HCT116 (cell line): ENCODE measurements at regions of chr20 and their contacts with region 1.

Region 1: GRCh38 chr20:36199345-36200257 is 36.7 kb upstream of the AAR2 start:
- DNase-seq: peak; percentile 45
- ATAC-seq: peak; percentile 91
- H3K4me3 ChIP-seq: no peak overlapping the region
- H3K27ac ChIP-seq: no peak overlapping the region
- H3K4me1 ChIP-seq: no peaks in the 10 kb centered on the region
- H3K27me3 ChIP-seq: no peaks in the 10 kb centered on the region
- CTCF ChIP-seq: peak; percentile 83 to 91 (median 88)
- POLR2A ChIP-seq: no peak
- RAD21 ChIP-seq: peak; percentile 89

Region 2: DNA sequence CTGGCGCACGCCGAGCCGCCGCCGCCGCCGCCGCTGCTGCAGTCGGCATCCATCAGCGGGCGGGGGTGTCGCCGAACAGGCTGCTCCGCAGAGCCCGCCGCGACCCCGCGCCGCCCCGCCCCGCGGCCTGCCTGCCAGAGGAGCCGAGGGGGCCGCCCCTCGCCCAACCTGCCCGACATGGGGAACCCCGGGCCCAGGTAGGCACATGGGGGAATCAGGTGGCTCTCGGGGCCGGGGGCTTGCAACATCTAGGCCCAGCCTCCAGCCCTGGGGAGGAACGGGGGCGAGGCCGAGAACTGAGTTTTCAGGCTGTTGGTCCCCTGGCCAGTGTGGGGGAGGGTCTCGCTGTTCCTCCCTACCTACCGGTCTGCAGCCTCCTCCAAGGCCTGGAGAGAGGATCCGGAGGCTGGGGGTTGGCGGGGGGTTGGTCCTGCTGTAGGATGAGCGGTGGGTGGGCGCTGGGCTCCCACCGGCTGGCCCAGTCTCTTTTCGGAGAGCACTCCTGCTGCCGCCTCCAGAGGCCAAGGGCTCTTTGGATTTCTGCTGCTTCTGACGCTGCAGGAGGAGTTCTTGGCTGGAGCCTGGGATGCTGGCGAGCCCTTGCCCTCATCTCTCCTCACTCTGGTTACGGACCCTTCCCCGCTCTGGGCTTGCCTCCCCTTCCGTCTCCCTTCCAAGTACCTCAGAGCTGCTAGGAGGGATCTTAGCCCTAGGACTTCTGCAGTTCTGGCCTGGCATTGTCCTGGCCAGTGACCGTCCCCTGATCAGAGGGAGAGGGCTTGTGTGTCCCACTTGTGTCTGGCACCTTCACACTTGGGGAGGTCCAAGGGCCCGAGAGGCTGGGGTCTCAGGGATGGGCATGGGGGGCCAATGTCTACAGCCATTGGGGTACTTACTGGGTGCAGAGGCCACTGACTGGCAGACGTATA is 44.6 kb before region 1 on chr20 and contains the start of gene EPB41L1:
- CTCF ChIA-PET with region 1: interaction called, 13 read pairs
- POLR2A ChIA-PET with region 1: no interaction called
- RAD21 ChIA-PET with region 1: interaction called in 1 of 2 experiments, 10 read pairs
- intact Hi-C with region 1: loop called (anchors 1 kb)
- DNase-seq: no peak
- ATAC-seq: peak; percentile 44
- H3K4me3 ChIP-seq: peak within 1 kb of the TSS; percentile 53 to 64
- H3K27ac ChIP-seq: peak within 1 kb of the TSS; percentile 44; the same call in 1 of the 2 replicates
- H3K4me1 ChIP-seq: peaks cover 14 to 27% of the 10 kb centered on the region in 2 experiments
- H3K27me3 ChIP-seq: no peaks in the 10 kb centered on the region
- CTCF ChIP-seq: no peak
- POLR2A ChIP-seq: no peak
- RAD21 ChIP-seq: no peak
- total RNA-seq, gene EPB41L1: 42.1 TPM

Region 3: GRCh38 chr20:36214684-36215256 is 15.2 kb after region 1 on chr20:
- CTCF ChIA-PET with region 1: interaction called, 13 read pairs
- POLR2A ChIA-PET with region 1: no interaction called
- RAD21 ChIA-PET with region 1: no interaction called
- intact Hi-C with region 1: no loop called
- DNase-seq: no peak
- ATAC-seq: peak; percentile 70
- H3K4me3 ChIP-seq: no peak overlapping the region
- H3K27ac ChIP-seq: no peak overlapping the region
- H3K4me1 ChIP-seq: peaks cover 3 to 5% of the 10 kb centered on the region in 2 experiments; a peak in 2 of 4 replicates
- H3K27me3 ChIP-seq: no peaks in the 10 kb centered on the region
- CTCF ChIP-seq: peak; percentile 65 to 79 (median 76)
- POLR2A ChIP-seq: no peak
- RAD21 ChIP-seq: peak; percentile 75

Region 4: DNA sequence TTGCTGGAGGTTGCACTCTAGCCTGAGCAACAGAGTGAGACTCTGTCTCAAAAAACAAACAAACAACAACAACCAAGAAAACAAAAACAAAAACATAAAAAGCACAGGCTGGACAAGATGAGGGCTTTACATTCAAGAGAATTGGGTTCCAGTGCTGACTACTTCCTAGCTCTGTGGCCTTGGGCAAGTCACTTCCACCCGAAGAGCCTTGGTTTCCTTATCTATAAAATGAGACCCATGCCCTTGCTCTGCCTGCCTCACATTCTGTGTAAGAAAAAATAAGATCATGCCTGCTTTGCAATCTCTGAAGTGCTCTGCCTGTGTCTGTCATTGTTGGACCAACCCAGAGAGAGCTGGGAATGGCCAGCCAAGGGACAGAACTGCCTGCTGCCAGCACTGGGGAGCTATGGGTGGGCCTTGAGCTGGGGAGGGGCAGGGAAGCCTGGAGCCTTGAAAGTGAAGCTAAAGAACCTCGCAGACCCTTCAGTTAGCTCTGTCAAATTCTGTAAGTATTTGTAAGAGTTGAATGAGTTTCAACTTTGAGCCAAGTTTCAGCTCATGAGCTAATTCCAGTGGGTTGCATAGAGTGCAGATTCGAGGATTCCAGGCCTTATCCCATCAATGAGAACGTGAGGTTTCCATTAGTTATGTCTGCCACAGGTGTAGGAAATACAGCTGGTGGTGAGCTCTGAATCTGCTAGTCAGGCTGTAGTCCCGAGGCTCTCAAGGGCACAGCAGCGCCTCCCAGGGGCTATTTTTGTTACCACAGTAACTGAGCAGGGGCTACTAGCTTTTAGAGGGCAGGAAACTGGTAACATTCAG is 199.8 kb after region 1 on chr20:
- CTCF ChIA-PET with region 1: interaction called, 25 read pairs
- POLR2A ChIA-PET with region 1: no interaction called
- RAD21 ChIA-PET with region 1: interaction called, 3 read pairs
- intact Hi-C with region 1: no loop called
- DNase-seq: peak; percentile 91
- ATAC-seq: peak; percentile 97
- H3K4me3 ChIP-seq: no peak overlapping the region
- H3K27ac ChIP-seq: no peak overlapping the region
- H3K4me1 ChIP-seq: peaks cover 0 to 7% of the 10 kb centered on the region in 2 experiments; a peak in 1 of 4 replicates
- H3K27me3 ChIP-seq: no peaks in the 10 kb centered on the region
- CTCF ChIP-seq: peak; percentile 80 to 91 (median 85)
- POLR2A ChIP-seq: no peak
- RAD21 ChIP-seq: peak; percentile 83

Region 5: DNA sequence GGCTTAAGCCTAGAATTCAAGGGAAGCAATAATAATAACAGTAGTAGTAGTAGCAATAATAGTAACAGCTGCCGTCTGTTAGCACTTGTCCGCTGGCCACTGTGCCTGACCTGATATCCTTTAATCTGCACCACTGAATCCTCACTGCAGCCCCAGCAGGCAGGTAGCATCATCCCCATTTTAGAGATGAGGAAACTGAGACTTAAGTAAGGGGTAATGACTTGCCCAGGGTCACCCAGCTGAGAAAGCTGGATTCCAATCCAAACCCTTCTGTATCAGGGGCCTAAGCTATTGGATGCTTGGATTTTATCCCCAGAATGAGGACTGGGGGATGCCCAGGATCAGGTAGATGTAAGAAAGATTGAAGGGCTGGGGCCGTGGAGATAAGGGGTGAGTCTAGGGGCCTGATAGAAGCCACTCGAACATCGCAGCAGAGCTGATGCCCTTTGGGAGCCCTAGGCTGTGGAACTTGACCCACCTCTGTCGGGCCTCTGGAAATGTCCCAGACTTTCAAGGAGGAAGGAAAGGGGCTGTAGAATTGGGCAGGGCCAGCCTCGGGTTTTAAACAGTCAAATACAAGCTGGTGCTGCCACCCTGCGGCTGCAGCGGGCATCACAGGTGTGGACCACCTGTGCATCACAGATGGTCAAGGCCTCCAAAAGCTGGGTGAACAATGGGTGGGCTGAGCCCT is 239.6 kb after region 1 on chr20:
- CTCF ChIA-PET with region 1: interaction called, 29 read pairs
- POLR2A ChIA-PET with region 1: no interaction called
- RAD21 ChIA-PET with region 1: interaction called in 1 of 2 experiments, 4 read pairs
- intact Hi-C with region 1: loop called (anchors 2 kb)
- DNase-seq: peak; percentile 32
- ATAC-seq: peak; percentile 74
- H3K4me3 ChIP-seq: no peak overlapping the region
- H3K27ac ChIP-seq: no peak overlapping the region
- H3K4me1 ChIP-seq: peaks cover 3 to 16% of the 10 kb centered on the region in 2 experiments; a peak in 1 of 4 replicates
- H3K27me3 ChIP-seq: no peaks in the 10 kb centered on the region
- CTCF ChIP-seq: peak; percentile 81 to 97 (median 95)
- POLR2A ChIP-seq: no peak
- RAD21 ChIP-seq: peak; percentile 94